ENCODE measurements at regions of chr6 and their contacts with region 1.

Region 1: GRCh38 chr6:14066782-14067406 is 50.7 kb upstream of the CD83 start:
- DNase-seq: no peak
- ATAC-seq: peak; percentile 87
- H3K4me3 ChIP-seq: no peak overlapping the region
- H3K27ac ChIP-seq: no peak overlapping the region
- H3K4me1 ChIP-seq: peaks cover 7% of the 10 kb centered on the region
- H3K27me3 ChIP-seq: peaks cover 0 to 6% of the 10 kb centered on the region in 2 experiments; a peak in 2 of 4 replicates
- CTCF ChIP-seq: peak; percentile 48 to 76 (median 58); a peak in 5 of 6 replicates
- EP300 ChIP-seq: no peak
- POLR2A ChIP-seq: no peak
- RAD21 ChIP-seq: peak; percentile 86

Region 2: GRCh38 chr6:13795041-13795750 is 271.7 kb before region 1 on chr6:
- CTCF ChIA-PET with region 1: interaction called, 19 read pairs
- POLR2A ChIA-PET with region 1: interaction called, 3 read pairs
- RAD21 ChIA-PET with region 1: interaction called, 41 read pairs
- SMC1A ChIA-PET with region 1: interaction called, 15 read pairs
- in situ Hi-C with region 1: loop called (anchors 5 kb)
- intact Hi-C with region 1: loop called (anchors 2 kb)
- DNase-seq: peak; percentile 71
- ATAC-seq: peak; percentile 100
- H3K4me3 ChIP-seq: no peak overlapping the region
- H3K27ac ChIP-seq: no peak overlapping the region
- H3K4me1 ChIP-seq: peaks cover 8% of the 10 kb centered on the region; the same call in 1 of the 2 replicates
- H3K27me3 ChIP-seq: no peaks in the 10 kb centered on the region
- CTCF ChIP-seq: peak; percentile 89 to 97 (median 91); a peak in 5 of 6 replicates
- EP300 ChIP-seq: no peak
- POLR2A ChIP-seq: no peak
- RAD21 ChIP-seq: peak; percentile 89

Region 3: GRCh38 chr6:13914351-13914750 is 152.5 kb before region 1 on chr6:
- CTCF ChIA-PET with region 1: interaction called, 194 read pairs
- POLR2A ChIA-PET with region 1: interaction called, 4 read pairs
- RAD21 ChIA-PET with region 1: interaction called, 67 read pairs
- SMC1A ChIA-PET with region 1: interaction called, 87 read pairs
- in situ Hi-C with region 1: loop called (anchors 5 kb)
- intact Hi-C with region 1: loop called (anchors 1 kb)
- DNase-seq: no peak
- ATAC-seq: no peak
- H3K4me3 ChIP-seq: no peak overlapping the region
- H3K27ac ChIP-seq: no peak overlapping the region
- H3K4me1 ChIP-seq: no peaks in the 10 kb centered on the region
- H3K27me3 ChIP-seq: no peaks in the 10 kb centered on the region; a peak in 1 of 4 replicates
- CTCF ChIP-seq: no peak
- EP300 ChIP-seq: no peak
- POLR2A ChIP-seq: no peak
- RAD21 ChIP-seq: no peak

Region 4: DNA sequence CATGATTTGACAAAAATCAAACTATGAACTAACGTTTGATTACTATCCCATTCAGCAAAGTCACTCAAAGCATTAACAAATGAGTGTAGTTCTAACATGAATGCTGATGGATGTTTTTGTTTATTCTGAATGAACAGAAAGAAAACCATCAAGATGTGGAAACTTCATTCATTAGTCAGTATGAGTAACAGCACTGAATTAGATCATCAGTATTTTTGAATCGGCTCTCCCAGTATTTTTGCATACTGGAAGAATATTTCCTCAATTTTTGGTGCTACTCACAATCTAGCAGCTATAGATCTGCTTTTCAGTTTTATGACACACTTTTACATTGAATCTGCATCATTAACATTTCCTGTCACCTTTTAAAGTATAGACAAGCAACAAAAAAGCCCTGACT is 13.1 kb before region 1 on chr6:
- CTCF ChIA-PET with region 1: interaction called, 157 read pairs
- POLR2A ChIA-PET with region 1: no interaction called
- RAD21 ChIA-PET with region 1: interaction called, 6 read pairs
- SMC1A ChIA-PET with region 1: interaction called, 43 read pairs
- in situ Hi-C with region 1: no loop called
- intact Hi-C with region 1: no loop called
- DNase-seq: no peak
- ATAC-seq: no peak
- H3K4me3 ChIP-seq: no peak overlapping the region
- H3K27ac ChIP-seq: no peak overlapping the region
- H3K4me1 ChIP-seq: no peaks in the 10 kb centered on the region
- H3K27me3 ChIP-seq: peaks cover 4 to 5% of the 10 kb centered on the region in 2 experiments; a peak in 2 of 4 replicates
- CTCF ChIP-seq: no peak
- EP300 ChIP-seq: no peak
- POLR2A ChIP-seq: no peak
- RAD21 ChIP-seq: no peak

Region 5: GRCh38 chr6:14095437-14095836 is 28.5 kb after region 1 on chr6:
- CTCF ChIA-PET with region 1: interaction called, 18 read pairs
- POLR2A ChIA-PET with region 1: interaction called, 3 read pairs
- RAD21 ChIA-PET with region 1: interaction called, 9 read pairs
- SMC1A ChIA-PET with region 1: interaction called, 226 read pairs
- in situ Hi-C with region 1: no loop called
- intact Hi-C with region 1: no loop called
- DNase-seq: no peak
- ATAC-seq: peak; percentile 79
- H3K4me3 ChIP-seq: no peak overlapping the region
- H3K27ac ChIP-seq: peak overlapping the region; percentile 80; the same call in 1 of the 2 replicates
- H3K4me1 ChIP-seq: peaks cover 56% of the 10 kb centered on the region
- H3K27me3 ChIP-seq: no peaks in the 10 kb centered on the region
- CTCF ChIP-seq: no peak
- EP300 ChIP-seq: peak; percentile 87 to 91; a peak in 3 of 4 replicates
- POLR2A ChIP-seq: no peak
- RAD21 ChIP-seq: no peak

Region 6: GRCh38 chr6:14123386-14124111 is 56.7 kb after region 1 on chr6:
- CTCF ChIA-PET with region 1: interaction called, 86 read pairs
- POLR2A ChIA-PET with region 1: interaction called, 5 read pairs
- RAD21 ChIA-PET with region 1: interaction called, 55 read pairs
- SMC1A ChIA-PET with region 1: interaction called, 49 read pairs
- in situ Hi-C with region 1: no loop called
- intact Hi-C with region 1: no loop called
- DNase-seq: no peak
- ATAC-seq: no peak
- H3K4me3 ChIP-seq: peak overlapping the region; percentile 48; the same call in 1 of the 2 replicates
- H3K27ac ChIP-seq: no peak overlapping the region
- H3K4me1 ChIP-seq: peaks cover 24% of the 10 kb centered on the region
- H3K27me3 ChIP-seq: no peaks in the 10 kb centered on the region
- CTCF ChIP-seq: no peak
- EP300 ChIP-seq: peak in 1 of 2 experiments; percentile 44; a peak in 1 of 4 replicates
- POLR2A ChIP-seq: no peak
- RAD21 ChIP-seq: no peak

Region 7: DNA sequence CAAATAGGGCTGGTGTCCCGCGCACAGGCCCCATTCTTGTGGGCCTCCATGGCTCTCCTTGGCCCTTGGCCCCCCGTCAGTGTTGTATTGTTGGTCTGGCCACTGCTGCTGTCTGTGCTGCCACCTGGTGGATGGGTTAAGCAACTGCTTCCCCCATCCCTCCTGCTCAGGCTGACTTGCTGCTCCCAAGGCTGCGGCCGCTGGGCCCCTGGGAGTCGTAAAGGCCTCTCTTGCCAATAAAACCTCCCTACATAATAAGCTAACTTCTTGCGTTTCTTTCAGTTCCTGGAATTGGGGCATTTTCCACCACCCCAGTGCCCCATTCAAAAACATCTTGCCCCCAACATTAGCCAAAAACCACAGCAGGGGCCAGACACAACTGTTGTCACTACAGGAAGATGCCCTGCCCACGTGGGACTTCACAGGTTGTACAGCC is 77.8 kb after region 1 on chr6:
- CTCF ChIA-PET with region 1: interaction called, 90 read pairs
- POLR2A ChIA-PET with region 1: interaction called, 3 read pairs
- RAD21 ChIA-PET with region 1: interaction called, 35 read pairs
- SMC1A ChIA-PET with region 1: interaction called, 64 read pairs
- in situ Hi-C with region 1: no loop called
- intact Hi-C with region 1: loop called (anchors 1 kb)
- DNase-seq: peak; percentile 40
- ATAC-seq: peak; percentile 92
- H3K4me3 ChIP-seq: no peak overlapping the region
- H3K27ac ChIP-seq: no peak overlapping the region
- H3K4me1 ChIP-seq: peaks cover 7% of the 10 kb centered on the region; the same call in 1 of the 2 replicates
- H3K27me3 ChIP-seq: no peaks in the 10 kb centered on the region
- CTCF ChIP-seq: peak; percentile 89 to 96 (median 94)
- EP300 ChIP-seq: no peak
- POLR2A ChIP-seq: no peak
- RAD21 ChIP-seq: peak; percentile 90

Region 8: GRCh38 chr6:14333556-14334305 is 266.8 kb after region 1 on chr6:
- CTCF ChIA-PET with region 1: no interaction called
- POLR2A ChIA-PET with region 1: no interaction called
- RAD21 ChIA-PET with region 1: no interaction called
- SMC1A ChIA-PET with region 1: no interaction called
- in situ Hi-C with region 1: no loop called
- intact Hi-C with region 1: no loop called
- DNase-seq: no peak
- ATAC-seq: no peak
- H3K4me3 ChIP-seq: no peak overlapping the region
- H3K27ac ChIP-seq: no peak overlapping the region
- H3K4me1 ChIP-seq: no peaks in the 10 kb centered on the region
- H3K27me3 ChIP-seq: no peaks in the 10 kb centered on the region
- CTCF ChIP-seq: no peak
- EP300 ChIP-seq: no peak
- POLR2A ChIP-seq: no peak
- RAD21 ChIP-seq: no peak